ENCODE measurements at regions of chr2 and their contacts with region 1.

Region 1: GRCh38 chr2:236180831-236181453 is 12.8 kb upstream of the GBX2 start:
- DNase-seq: peak in 1 of 3 donors; percentile 46
- ATAC-seq: no peak
- H3K4me3 ChIP-seq: no peak overlapping the region
- H3K27ac ChIP-seq: no peak overlapping the region
- H3K4me1 ChIP-seq: no peaks in the 10 kb centered on the region
- H3K27me3 ChIP-seq: no peaks in the 10 kb centered on the region

Region 2: GRCh38 chr2:235577404-235578330 is 603.3 kb before region 1 on chr2:
- intact Hi-C with region 1: no loop called
- DNase-seq: peak in 2 of 3 donors; percentile 61 to 79
- ATAC-seq: peak; percentile 69 to 72
- H3K4me3 ChIP-seq: no peak overlapping the region
- H3K27ac ChIP-seq: peak overlapping the region; percentile 31
- H3K4me1 ChIP-seq: peaks cover 13% of the 10 kb centered on the region
- H3K27me3 ChIP-seq: no peaks in the 10 kb centered on the region

Region 3: DNA sequence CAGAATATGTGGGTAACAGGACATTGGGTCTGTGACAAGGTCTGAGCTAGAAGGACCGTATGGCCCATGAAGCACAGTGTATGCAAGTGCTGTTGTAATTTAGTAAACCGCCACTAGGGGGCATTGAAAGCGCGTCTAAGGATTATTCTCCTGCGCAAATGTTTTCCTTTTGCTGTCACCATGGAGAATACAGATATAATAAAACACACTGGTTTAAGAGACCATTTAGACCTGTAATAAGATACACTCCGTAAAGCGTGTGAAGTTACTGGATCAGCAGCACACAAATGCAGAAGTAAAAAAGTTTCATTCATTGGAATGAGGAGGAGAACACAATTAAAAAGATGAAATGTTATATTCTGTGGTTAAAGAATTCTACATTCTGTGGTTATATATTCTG is 414.7 kb before region 1 on chr2:
- intact Hi-C with region 1: loop called in 2 of 4 experiments (anchors 5 kb)
- DNase-seq: no peak
- ATAC-seq: peak; percentile 92 to 93
- H3K4me3 ChIP-seq: no peak overlapping the region
- H3K27ac ChIP-seq: no peak overlapping the region
- H3K4me1 ChIP-seq: no peaks in the 10 kb centered on the region
- H3K27me3 ChIP-seq: no peaks in the 10 kb centered on the region

Region 4: DNA sequence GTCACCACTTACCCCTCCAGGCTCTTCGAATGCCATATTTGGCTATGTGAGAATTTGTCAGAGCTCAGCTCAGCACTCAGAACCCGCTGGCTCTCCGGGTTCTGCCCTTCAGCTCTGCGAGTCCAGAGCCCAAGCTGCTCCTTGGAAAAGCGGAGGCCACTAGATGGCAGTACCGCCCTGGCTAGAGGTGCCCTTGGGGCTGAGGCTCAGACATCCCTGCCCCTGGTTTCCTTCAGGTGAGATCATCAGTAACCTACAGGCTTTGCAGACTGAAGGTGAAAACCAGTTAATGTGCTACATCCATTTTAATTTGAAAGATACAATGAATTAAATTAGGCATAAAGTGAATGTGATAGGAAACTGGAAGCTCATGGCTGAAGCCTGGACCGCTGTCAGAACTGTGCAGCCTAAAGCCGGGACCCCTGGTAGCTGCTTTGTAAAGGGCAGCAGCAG is 401.5 kb before region 1 on chr2:
- intact Hi-C with region 1: loop called in 3 of 4 experiments (anchors 5 to 10 kb)
- DNase-seq: peak; percentile 67 to 86 (median 79)
- ATAC-seq: peak; percentile 77 to 87
- H3K4me3 ChIP-seq: no peak overlapping the region
- H3K27ac ChIP-seq: no peak overlapping the region
- H3K4me1 ChIP-seq: no peaks in the 10 kb centered on the region
- H3K27me3 ChIP-seq: no peaks in the 10 kb centered on the region

Region 5: DNA sequence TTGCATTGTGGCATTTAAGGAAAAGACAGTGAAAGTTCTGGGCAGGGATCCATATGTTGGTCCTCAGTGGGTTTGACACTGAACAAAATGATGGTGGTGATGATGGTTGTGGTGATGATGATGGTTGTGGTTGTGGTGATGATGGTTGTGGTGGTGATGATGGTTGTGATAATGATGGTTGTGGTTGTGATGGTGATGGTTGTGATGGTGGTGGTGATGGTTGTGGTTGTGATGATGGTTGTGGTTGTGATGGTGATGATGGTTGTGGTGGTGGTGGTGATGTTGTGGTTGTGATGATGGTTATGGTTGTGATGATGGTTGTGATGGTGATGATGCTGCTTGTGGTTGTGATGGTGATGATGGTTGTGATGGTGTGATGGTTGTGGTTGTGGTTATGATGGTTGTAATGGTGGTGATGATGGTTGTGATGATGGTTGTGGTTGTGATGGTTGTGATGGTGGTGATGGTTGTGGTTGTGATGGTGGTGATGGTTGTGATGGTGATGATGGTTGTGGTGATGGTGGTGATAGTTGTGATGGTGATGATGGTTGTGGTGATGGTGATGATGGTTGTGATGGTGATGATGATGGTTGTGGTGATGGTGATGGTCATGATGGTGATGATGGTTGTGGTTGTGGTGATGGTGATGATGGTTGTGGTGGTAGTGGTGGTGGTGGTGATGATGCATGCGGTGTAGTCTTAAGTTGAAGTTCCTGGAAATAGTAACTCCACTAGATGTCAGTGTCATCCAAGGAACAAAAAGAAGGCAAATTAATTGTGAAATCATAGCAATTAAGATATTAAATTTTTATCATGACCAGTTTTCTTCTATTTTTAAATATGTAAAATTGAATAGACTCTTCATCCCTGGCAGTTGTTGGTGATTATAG is 378.2 kb before region 1 on chr2:
- intact Hi-C with region 1: loop called in 1 of 4 experiments (anchors 10 kb)
- DNase-seq: no peak
- ATAC-seq: no peak
- H3K4me3 ChIP-seq: no peak overlapping the region
- H3K27ac ChIP-seq: no peak overlapping the region
- H3K4me1 ChIP-seq: no peaks in the 10 kb centered on the region
- H3K27me3 ChIP-seq: no peaks in the 10 kb centered on the region

Measured in right cardiac atrium (tissue), 5 donors.